GM12878 (cell line): ENCODE measurements at regions of chr2 and their contacts with region 1.

Region 1: GRCh38 chr2:16608661-16609643 is 56.7 kb downstream of the CYRIA start:
- DNase-seq: peak; percentile 16
- ATAC-seq: peak; percentile 97
- H3K4me3 ChIP-seq: peak overlapping the region; percentile 44
- H3K27ac ChIP-seq: no peak overlapping the region
- H3K4me1 ChIP-seq: no peaks in the 10 kb centered on the region
- H3K27me3 ChIP-seq: no peaks in the 10 kb centered on the region
- CTCF ChIP-seq: peak; percentile 93 to 99 (median 94)
- EP300 ChIP-seq: no peak
- POLR2A ChIP-seq: no peak
- RAD21 ChIP-seq: peak; percentile 74

Region 2: DNA sequence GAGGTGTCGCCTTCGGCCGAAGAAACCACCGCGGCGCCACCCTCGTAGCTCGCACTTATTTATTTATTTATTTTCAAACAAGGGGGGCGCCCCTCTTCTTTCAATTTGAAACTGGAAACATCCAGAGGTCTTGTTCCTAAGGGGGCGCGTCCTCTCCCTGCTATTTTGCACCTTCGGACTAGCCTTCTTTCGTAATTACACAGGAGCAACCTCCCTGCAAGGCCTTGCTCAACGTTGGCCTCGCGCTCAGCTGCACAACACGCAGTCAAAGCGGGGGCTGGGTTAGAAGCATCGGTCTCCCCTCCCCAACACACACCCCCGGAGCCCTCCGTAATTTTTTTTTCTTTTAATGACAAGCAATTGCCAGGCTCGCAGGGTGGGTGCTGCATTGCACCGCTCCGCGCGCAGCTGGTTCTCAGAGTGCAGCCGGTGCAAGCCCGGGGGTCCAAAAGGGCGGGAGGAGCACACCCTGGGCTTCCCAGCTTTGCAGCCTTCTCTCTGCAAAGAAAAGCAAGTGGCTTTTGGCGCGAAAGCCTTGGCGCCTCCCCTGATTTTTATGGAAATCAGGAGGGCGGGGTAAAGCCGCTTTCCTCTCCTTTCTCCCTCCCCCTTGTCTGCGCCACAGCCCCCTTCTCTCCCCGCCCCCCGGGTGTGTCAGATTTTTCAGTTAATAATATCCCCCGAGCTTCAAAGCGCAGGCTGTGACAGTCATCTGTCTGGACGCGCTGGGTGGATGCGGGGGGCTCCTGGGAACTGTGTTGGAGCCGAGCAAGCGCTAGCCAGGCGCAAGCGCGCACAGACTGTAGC is 668.9 kb before region 1 on chr2 and contains the start of gene MYCN:
- CTCF ChIA-PET with region 1: no interaction called
- POLR2A ChIA-PET with region 1: no interaction called
- RAD21 ChIA-PET with region 1: no interaction called
- SMC1A ChIA-PET with region 1: no interaction called
- in situ Hi-C with region 1: loop called (anchors 5 kb)
- intact Hi-C with region 1: loop called (anchors 2 kb)
- DNase-seq: no peak
- ATAC-seq: no peak
- H3K4me3 ChIP-seq: no peak within 1 kb of the TSS
- H3K27ac ChIP-seq: no peak within 1 kb of the TSS
- H3K4me1 ChIP-seq: no peaks in the 10 kb centered on the region
- H3K27me3 ChIP-seq: peaks cover 12 to 14% of the 10 kb centered on the region in 2 experiments
- CTCF ChIP-seq: peak in 1 of 3 experiments; percentile 45; a peak in 3 of 6 replicates
- EP300 ChIP-seq: no peak
- POLR2A ChIP-seq: no peak
- RAD21 ChIP-seq: peak; percentile 74
- polyA plus RNA-seq, gene MYCN: not detected

Region 3: DNA sequence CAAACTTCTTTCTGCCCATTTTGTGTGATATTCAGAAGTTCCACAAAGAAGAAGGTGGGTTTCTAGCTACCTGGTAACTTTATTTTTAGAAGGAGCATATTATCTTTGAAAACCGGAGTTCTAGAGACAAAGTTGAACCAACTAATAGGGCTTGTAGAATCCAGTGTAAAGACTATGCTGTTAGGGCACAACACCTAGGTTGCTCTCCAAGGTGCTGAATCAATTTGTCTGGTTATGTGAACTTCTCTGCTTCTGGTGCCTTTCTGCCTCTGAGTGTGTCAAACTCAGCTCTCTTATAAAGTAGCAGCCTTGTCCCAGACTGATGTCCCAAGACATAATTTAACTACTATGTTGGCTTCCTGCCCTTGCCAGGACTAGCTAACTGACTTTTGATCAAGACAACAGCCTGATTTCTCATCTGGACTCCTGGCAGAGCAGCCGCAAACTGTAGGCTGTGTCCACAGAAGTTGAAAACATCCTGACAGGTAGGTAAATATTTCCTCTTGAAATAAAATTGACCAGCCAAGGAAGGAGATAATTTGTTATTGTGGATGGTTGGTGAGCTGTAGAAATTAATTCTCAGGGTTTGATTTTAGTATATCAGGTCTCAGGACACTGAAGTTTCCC is 62.7 kb before region 1 on chr2:
- CTCF ChIA-PET with region 1: interaction called, 12 read pairs
- POLR2A ChIA-PET with region 1: no interaction called
- RAD21 ChIA-PET with region 1: no interaction called
- SMC1A ChIA-PET with region 1: no interaction called
- in situ Hi-C with region 1: no loop called
- intact Hi-C with region 1: no loop called
- DNase-seq: no peak
- ATAC-seq: peak; percentile 69
- H3K4me3 ChIP-seq: no peak overlapping the region
- H3K27ac ChIP-seq: no peak overlapping the region
- H3K4me1 ChIP-seq: no peaks in the 10 kb centered on the region
- H3K27me3 ChIP-seq: no peaks in the 10 kb centered on the region
- CTCF ChIP-seq: no peak
- EP300 ChIP-seq: no peak
- POLR2A ChIP-seq: no peak
- RAD21 ChIP-seq: no peak

Region 4: GRCh38 chr2:16625201-16625729 is 16.3 kb after region 1 on chr2:
- CTCF ChIA-PET with region 1: interaction called, 29 read pairs
- POLR2A ChIA-PET with region 1: interaction called, 3 read pairs
- RAD21 ChIA-PET with region 1: interaction called, 12 read pairs
- SMC1A ChIA-PET with region 1: interaction called, 13 read pairs
- in situ Hi-C with region 1: no loop called
- intact Hi-C with region 1: no loop called
- DNase-seq: no peak
- ATAC-seq: peak; percentile 43
- H3K4me3 ChIP-seq: no peak overlapping the region
- H3K27ac ChIP-seq: no peak overlapping the region
- H3K4me1 ChIP-seq: peaks cover 16% of the 10 kb centered on the region
- H3K27me3 ChIP-seq: peaks cover 0 to 11% of the 10 kb centered on the region in 2 experiments
- CTCF ChIP-seq: no peak
- EP300 ChIP-seq: no peak
- POLR2A ChIP-seq: no peak
- RAD21 ChIP-seq: no peak

Region 5: DNA sequence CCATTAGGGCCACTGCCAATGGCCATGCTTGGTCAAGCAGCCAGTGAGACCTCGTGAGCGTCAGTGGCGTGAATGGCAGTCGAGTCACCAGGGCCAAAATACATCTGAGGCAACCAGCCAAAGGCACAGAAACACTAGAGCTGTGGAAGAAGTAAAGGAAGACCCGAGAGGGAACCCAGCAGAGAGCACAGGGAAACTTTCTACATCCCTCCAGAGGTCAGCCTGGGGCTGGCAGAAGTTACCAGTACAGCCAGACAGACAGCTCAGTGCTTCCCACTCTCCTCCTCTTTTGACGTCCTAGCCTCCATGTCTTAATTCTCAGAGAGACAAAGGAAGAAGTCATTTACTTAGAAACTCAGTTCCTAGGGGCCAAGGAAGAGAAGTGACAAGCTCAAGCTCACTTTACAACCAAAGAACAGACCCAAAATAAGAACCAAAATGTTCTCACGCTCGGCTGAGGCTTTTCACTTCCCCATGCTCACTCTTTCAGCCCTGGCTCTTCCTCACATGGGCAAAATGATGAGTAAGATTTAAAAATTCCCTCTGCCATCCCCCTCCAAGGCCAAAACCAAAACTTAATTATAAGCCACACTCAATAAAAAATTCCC is 47.9 kb after region 1 on chr2:
- CTCF ChIA-PET with region 1: interaction called, 14 read pairs
- POLR2A ChIA-PET with region 1: no interaction called
- RAD21 ChIA-PET with region 1: interaction called, 4 read pairs
- SMC1A ChIA-PET with region 1: interaction called, 30 read pairs
- in situ Hi-C with region 1: no loop called
- intact Hi-C with region 1: no loop called
- DNase-seq: peak; percentile 83
- ATAC-seq: peak; percentile 67
- H3K4me3 ChIP-seq: peak overlapping the region; percentile 3; the same call in 1 of the 2 replicates
- H3K27ac ChIP-seq: peak overlapping the region; percentile 68
- H3K4me1 ChIP-seq: peaks cover 48% of the 10 kb centered on the region
- H3K27me3 ChIP-seq: peaks cover 0 to 2% of the 10 kb centered on the region in 2 experiments; a peak in 2 of 4 replicates
- CTCF ChIP-seq: no peak
- EP300 ChIP-seq: peak; percentile 62 to 73; a peak in 3 of 4 replicates
- POLR2A ChIP-seq: no peak
- RAD21 ChIP-seq: no peak